ENCODE measurements at regions of chrX and their contacts with region 1.

Region 1: GRCh38 chrX:12771445-12772069 is 19.7 kb upstream of the PRPS2 start:
- DNase-seq: peak; percentile 61 to 73 (median 62)
- H3K4me3 ChIP-seq: no peak overlapping the region
- H3K4me3 Mint-ChIP-seq: peak overlapping the region in 2 of 8 donors; percentile 4 to 31
- H3K27ac ChIP-seq: no peak overlapping the region
- H3K27ac Mint-ChIP-seq: peak overlapping the region in 1 of 7 donors; percentile 48
- H3K4me1 ChIP-seq: peaks cover 9% of the 10 kb centered on the region
- H3K4me1 Mint-ChIP-seq: peaks cover 4 to 13% (median 8%) of the 10 kb centered on the region in 4 donors
- H3K27me3 ChIP-seq: no peaks in the 10 kb centered on the region
- H3K27me3 Mint-ChIP-seq: peaks cover 10 to 14% of the 10 kb centered on the region in 2 donors

Region 2: DNA sequence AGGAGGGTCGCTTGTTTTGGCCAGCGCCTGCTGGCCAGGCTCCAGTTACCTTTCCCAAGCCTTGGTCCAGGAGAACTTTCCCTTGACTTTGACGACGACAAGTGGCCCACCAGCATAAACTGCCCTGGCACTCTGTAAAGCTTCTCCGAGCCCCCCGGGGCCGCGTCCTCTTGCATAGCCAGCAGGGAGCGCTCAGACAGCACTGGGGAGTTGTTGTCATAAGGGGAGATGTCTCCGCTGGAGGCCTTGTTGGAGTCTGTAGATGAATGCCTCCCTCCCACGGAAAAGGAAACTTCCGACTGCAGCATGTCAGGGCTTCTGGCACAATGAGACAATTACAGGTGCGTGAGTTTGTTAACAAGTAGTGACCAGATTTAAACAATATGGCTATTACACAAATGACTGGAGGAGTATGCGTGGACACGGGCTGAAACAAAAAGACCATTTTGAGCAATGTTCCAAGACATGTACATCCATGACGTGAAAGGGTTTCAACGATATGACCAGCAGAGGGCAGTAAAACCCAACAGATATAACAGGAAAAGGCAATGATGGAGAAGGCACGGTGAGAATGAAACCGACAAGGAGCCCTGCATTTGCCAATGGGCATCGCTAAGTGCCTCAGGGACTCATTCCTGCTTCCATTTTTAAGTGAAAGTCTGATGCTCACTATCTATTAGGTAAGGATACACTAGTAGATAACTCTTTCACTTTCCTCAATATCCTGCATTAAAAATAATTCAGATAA is 1627.5 kb before region 1 on chrX:
- CTCF ChIA-PET with region 1: interaction called, 3 read pairs
- POLR2A ChIA-PET with region 1: no interaction called
- intact Hi-C with region 1: loop called (anchors 1 kb)
- DNase-seq: peak; percentile 41 to 62 (median 58)
- H3K4me3 ChIP-seq: no peak overlapping the region
- H3K4me3 Mint-ChIP-seq: peak overlapping the region in 6 of 8 donors; percentile 36 to 78 (median 59)
- H3K27ac ChIP-seq: no peak overlapping the region
- H3K27ac Mint-ChIP-seq: no peak overlapping the region
- H3K4me1 ChIP-seq: no peaks in the 10 kb centered on the region
- H3K4me1 Mint-ChIP-seq: peaks cover 0 to 4% (median 3%) of the 10 kb centered on the region in 4 donors
- H3K27me3 ChIP-seq: no peaks in the 10 kb centered on the region
- H3K27me3 Mint-ChIP-seq: peaks cover 1 to 6% of the 10 kb centered on the region in 2 donors

Region 3: DNA sequence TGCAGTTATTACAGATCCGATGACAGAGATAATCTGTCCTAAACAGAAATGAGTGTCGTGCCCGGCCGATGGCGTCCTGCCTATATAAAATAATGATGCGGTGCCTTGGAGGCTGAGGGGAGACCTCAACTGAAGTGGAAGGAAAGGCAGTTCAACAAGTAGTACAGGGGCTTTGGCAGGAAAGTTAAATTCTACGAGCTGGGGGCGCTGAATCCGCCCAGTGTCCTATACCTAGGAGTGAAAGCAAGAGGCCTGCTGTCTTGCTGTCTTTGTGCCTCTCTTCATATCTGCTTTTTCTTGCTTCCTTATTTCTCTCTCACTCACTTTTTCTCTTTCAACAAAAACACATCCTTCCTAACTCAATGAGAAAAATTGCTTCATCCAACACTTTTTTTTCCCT is 62.5 kb before region 1 on chrX:
- CTCF ChIA-PET with region 1: no interaction called
- POLR2A ChIA-PET with region 1: no interaction called
- intact Hi-C with region 1: no loop called
- DNase-seq: no peak
- H3K4me3 ChIP-seq: no peak overlapping the region
- H3K4me3 Mint-ChIP-seq: no peak overlapping the region
- H3K27ac ChIP-seq: no peak overlapping the region
- H3K27ac Mint-ChIP-seq: no peak overlapping the region
- H3K4me1 ChIP-seq: no peaks in the 10 kb centered on the region
- H3K4me1 Mint-ChIP-seq: no peaks in the 10 kb centered on the region
- H3K27me3 ChIP-seq: no peaks in the 10 kb centered on the region
- H3K27me3 Mint-ChIP-seq: peaks cover 0 to 5% of the 10 kb centered on the region in 2 donors

Region 4: DNA sequence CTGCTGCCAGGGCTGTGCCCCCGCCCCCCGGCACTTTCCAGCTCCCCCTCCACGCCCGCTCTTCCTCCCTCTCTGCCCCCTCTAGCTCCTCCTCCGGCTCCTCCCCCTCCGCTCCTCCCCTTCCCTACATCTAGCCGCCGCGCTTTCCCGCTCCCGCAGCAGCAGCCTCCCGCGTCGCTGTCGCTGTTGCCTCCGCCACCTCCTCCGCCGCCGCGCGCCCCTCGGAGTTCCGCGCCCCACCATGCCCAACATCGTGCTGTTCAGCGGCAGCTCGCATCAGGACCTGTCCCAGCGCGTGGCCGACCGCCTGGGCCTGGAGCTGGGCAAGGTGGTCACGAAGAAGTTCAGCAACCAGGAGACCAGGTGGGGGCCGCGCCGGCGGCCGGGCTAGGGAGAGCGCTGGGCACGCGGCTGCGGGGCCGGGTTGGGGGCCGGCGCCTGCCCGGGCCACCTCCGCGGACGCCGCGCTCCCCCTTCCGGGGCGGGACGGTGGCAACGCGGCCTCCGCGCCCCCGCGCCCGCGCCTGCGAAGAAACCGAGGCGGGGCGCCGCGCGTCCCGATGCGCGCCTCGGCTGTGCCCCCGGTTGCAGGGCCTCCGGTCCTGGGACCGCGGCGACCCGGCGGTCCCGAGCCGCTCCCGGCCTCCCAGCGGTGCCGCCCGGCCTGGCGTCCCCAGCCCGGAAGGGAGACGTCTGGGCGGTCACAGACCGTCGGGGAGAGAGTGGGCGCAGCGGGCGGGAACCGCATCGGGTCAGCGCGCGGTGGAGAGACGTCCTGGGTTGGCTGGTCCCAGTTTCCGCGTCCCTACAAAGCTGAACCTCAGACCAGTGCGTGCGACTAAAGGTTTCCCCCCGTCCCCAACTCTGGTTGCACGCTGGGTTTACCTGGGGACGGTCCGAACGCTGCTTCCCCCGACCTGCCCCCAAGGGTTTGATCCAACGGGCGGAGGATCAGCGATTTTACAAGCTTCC is 20.0 kb after region 1 on chrX and contains the start of gene PRPS2:
- CTCF ChIA-PET with region 1: interaction called, 36 read pairs
- POLR2A ChIA-PET with region 1: interaction called, 4 read pairs
- intact Hi-C with region 1: no loop called
- DNase-seq: peak; percentile 61 to 74 (median 65)
- H3K4me3 ChIP-seq: peak within 1 kb of the TSS in 1 of 2 donors; percentile 62
- H3K4me3 Mint-ChIP-seq: peak within 1 kb of the TSS; percentile 87 to 91 (median 88)
- H3K27ac ChIP-seq: peak within 1 kb of the TSS; percentile 41
- H3K27ac Mint-ChIP-seq: peak within 1 kb of the TSS; percentile 67 to 90 (median 72)
- H3K4me1 ChIP-seq: peaks cover 22% of the 10 kb centered on the region
- H3K4me1 Mint-ChIP-seq: peaks cover 11 to 34% (median 20%) of the 10 kb centered on the region in 4 donors
- H3K27me3 ChIP-seq: no peaks in the 10 kb centered on the region
- H3K27me3 Mint-ChIP-seq: no peaks in the 10 kb centered on the region
- total RNA-seq, gene PRPS2: 26.5 to 31.5 TPM